ENCODE measurements at regions of chr17 and their contacts with region 1.

Region 1: GRCh38 chr17:10172241-10172741 is 26.1 kb downstream of the GAS7 start:
- DNase-seq: peak in 1 of 2 donors; percentile 12
- ATAC-seq: peak; percentile 31 to 59 (median 48)
- H3K4me3 ChIP-seq: no peak overlapping the region
- H3K4me3 Mint-ChIP-seq: peak overlapping the region; percentile 61
- H3K27ac ChIP-seq: peak overlapping the region; percentile 84
- H3K27ac Mint-ChIP-seq: peak overlapping the region; percentile 89 to 90
- H3K4me1 ChIP-seq: peaks cover 66% of the 10 kb centered on the region
- H3K4me1 Mint-ChIP-seq: peaks cover 59 to 64% of the 10 kb centered on the region in 2 donors
- H3K27me3 ChIP-seq: no peaks in the 10 kb centered on the region
- H3K27me3 Mint-ChIP-seq: no peaks in the 10 kb centered on the region
- CTCF ChIP-seq: no peak

Region 2: DNA sequence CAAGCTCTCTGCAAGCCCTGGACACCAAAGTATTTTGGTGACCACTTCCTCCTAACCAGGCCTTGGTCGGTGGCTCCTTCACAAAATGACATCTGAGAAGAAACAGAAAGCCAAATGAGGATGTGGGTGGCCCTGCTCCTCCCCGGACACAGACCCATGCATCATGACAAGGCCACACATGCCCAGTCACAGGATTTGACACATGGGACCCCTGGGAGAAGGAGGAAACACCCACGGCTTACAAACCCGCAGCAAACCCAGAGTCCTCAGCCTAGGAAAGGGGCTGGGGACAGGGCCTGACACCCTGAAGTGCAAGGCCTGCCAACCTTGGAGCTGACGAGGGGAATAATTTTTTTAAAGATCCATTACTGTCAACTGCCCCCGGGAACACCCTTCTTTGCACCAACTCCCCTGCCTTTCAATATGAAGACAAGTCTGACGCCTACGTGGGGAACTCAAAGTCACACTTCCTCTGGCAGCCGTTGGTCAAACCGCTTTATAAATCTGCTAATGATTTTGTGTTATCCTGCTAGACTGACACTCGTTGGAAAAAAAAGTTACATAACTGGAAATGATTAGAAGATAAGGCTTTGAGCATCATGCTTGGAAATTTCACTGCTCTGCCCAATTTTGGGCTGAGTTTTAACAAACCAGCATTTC is 15.2 kb before region 1 on chr17:
- intact Hi-C with region 1: loop called (anchors 1 kb)
- DNase-seq: peak; percentile 59 to 65
- ATAC-seq: peak; percentile 71 to 82 (median 81)
- H3K4me3 ChIP-seq: no peak overlapping the region
- H3K4me3 Mint-ChIP-seq: peak overlapping the region; percentile 71
- H3K27ac ChIP-seq: peak overlapping the region; percentile 82
- H3K27ac Mint-ChIP-seq: peak overlapping the region; percentile 92 to 94
- H3K4me1 ChIP-seq: peaks cover 57% of the 10 kb centered on the region
- H3K4me1 Mint-ChIP-seq: peaks cover 32 to 46% of the 10 kb centered on the region in 2 donors
- H3K27me3 ChIP-seq: no peaks in the 10 kb centered on the region
- H3K27me3 Mint-ChIP-seq: no peaks in the 10 kb centered on the region
- CTCF ChIP-seq: no peak

Region 3: GRCh38 chr17:10186771-10187411 is 14.6 kb after region 1 on chr17:
- intact Hi-C with region 1: loop called (anchors 2 kb)
- DNase-seq: no peak
- ATAC-seq: peak; percentile 77 to 92 (median 85)
- H3K4me3 ChIP-seq: no peak overlapping the region
- H3K4me3 Mint-ChIP-seq: peak overlapping the region; percentile 37
- H3K27ac ChIP-seq: peak overlapping the region; percentile 18
- H3K27ac Mint-ChIP-seq: peak overlapping the region; percentile 51 to 84
- H3K4me1 ChIP-seq: peaks cover 43% of the 10 kb centered on the region
- H3K4me1 Mint-ChIP-seq: peaks cover 38 to 59% of the 10 kb centered on the region in 2 donors
- H3K27me3 ChIP-seq: no peaks in the 10 kb centered on the region
- H3K27me3 Mint-ChIP-seq: no peaks in the 10 kb centered on the region
- CTCF ChIP-seq: no peak

Region 4: GRCh38 chr17:10198509-10199253 is 26.4 kb after region 1 on chr17 and contains the start of gene GAS7:
- intact Hi-C with region 1: loop called (anchors 1 kb)
- DNase-seq: peak; percentile 68 to 78
- ATAC-seq: peak; percentile 69 to 84 (median 76)
- H3K4me3 ChIP-seq: peak within 1 kb of the TSS; percentile 45
- H3K4me3 Mint-ChIP-seq: peak within 1 kb of the TSS; percentile 84
- H3K27ac ChIP-seq: no peak within 1 kb of the TSS
- H3K27ac Mint-ChIP-seq: peak within 1 kb of the TSS; percentile 7 to 74
- H3K4me1 ChIP-seq: peaks cover 30% of the 10 kb centered on the region
- H3K4me1 Mint-ChIP-seq: peaks cover 19 to 34% of the 10 kb centered on the region in 2 donors
- H3K27me3 ChIP-seq: no peaks in the 10 kb centered on the region
- H3K27me3 Mint-ChIP-seq: peaks cover 18 to 27% of the 10 kb centered on the region in 2 donors
- CTCF ChIP-seq: no peak
- total RNA-seq, gene GAS7: 70.7 to 89.1 (median 84.8) TPM